A549 (cell line): ENCODE measurements at regions of chr19 and their contacts with region 1.

Region 1: GRCh38 chr19:19342756-19343322 is 22.2 kb downstream of the MAU2 start:
- DNase-seq: peak; percentile 70 to 76
- ATAC-seq: peak; percentile 88 to 94
- H3K4me3 ChIP-seq: no peak overlapping the region
- H3K27ac ChIP-seq: no peak overlapping the region
- H3K4me1 ChIP-seq: no peaks in the 10 kb centered on the region
- CTCF ChIP-seq: peak; percentile 70
- EP300 ChIP-seq: no peak
- POLR2A ChIP-seq: no peak
- RAD21 ChIP-seq: peak; percentile 54 to 58; a peak in 4 of 5 replicates

Region 2: DNA sequence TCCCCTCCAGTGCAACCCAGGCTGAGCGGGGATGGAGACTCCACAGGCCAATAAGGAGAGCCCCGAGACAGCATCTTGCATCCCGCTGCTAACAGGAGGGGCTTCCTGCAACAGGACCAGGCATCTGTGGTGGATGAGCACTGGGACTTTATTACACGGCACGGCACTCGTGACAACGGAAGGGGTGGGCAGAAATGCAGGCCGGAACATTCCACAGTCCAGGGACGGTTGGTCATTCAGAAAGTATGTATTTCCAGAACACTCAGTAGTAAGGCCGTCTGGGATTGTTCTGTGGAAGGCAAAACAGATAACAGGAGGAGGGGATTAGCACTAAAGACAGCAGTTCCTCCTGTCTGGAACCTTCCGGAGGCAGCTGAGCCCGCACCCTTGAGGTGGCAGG is 66.5 kb before region 1 on chr19:
- CTCF ChIA-PET with region 1: no interaction called
- POLR2A ChIA-PET with region 1: no interaction called
- DNase-seq: no peak
- ATAC-seq: no peak
- H3K4me3 ChIP-seq: no peak overlapping the region
- H3K27ac ChIP-seq: no peak overlapping the region
- H3K4me1 ChIP-seq: no peaks in the 10 kb centered on the region
- CTCF ChIP-seq: no peak
- EP300 ChIP-seq: no peak
- POLR2A ChIP-seq: no peak
- RAD21 ChIP-seq: no peak

Region 3: GRCh38 chr19:19324059-19324770 is 18.6 kb before region 1 on chr19:
- CTCF ChIA-PET with region 1: interaction called, 22 read pairs
- POLR2A ChIA-PET with region 1: no interaction called
- DNase-seq: no peak
- ATAC-seq: no peak
- H3K4me3 ChIP-seq: no peak overlapping the region
- H3K27ac ChIP-seq: no peak overlapping the region
- H3K4me1 ChIP-seq: peaks cover 8% of the 10 kb centered on the region
- CTCF ChIP-seq: no peak
- EP300 ChIP-seq: no peak
- POLR2A ChIP-seq: no peak
- RAD21 ChIP-seq: no peak

Region 4: DNA sequence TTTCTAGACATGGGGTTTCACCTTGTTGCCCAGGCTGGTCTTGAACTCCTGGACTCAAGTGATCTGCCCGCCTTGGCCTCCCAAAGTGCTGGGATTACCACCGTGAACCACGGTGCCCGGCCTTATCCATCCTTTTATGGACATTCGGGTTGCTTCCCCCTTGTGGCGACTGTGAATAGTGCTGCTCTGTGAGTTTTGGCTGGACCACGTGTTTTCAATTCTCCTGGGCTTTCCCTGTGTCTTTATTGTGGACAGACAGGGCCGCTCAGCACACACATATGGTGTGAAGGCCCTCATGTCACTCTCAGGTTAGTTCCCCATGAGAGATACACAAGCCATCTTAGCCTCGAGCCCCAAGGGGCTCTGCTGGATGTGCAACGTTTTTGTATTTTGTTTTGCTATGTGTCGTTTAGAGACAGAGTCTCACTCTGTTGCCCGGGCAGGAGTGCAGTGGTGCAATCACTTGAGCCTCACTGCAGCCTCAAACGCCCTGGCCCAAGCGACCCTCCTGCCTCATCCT is 18.3 kb after region 1 on chr19:
- CTCF ChIA-PET with region 1: interaction called, 11 read pairs
- POLR2A ChIA-PET with region 1: no interaction called
- DNase-seq: peak; percentile 70 to 84
- ATAC-seq: peak; percentile 86 to 89
- H3K4me3 ChIP-seq: no peak overlapping the region
- H3K27ac ChIP-seq: peak overlapping the region in 1 of 2 experiments; percentile 49; a peak in 1 of 6 replicates
- H3K4me1 ChIP-seq: 0 out of 3 replicates have a peak, but pooled peaks cover 4% of the 10 kb centered on the region
- CTCF ChIP-seq: peak; percentile 46
- EP300 ChIP-seq: no peak
- POLR2A ChIP-seq: no peak
- RAD21 ChIP-seq: 0 out of 5 replicates have a peak, but pooled peaks of 1 of the 2 experiments have one; percentile 27